GM10248 (cell line): ENCODE measurements at regions of chr1 and their contacts with region 1.

Region 1: DNA sequence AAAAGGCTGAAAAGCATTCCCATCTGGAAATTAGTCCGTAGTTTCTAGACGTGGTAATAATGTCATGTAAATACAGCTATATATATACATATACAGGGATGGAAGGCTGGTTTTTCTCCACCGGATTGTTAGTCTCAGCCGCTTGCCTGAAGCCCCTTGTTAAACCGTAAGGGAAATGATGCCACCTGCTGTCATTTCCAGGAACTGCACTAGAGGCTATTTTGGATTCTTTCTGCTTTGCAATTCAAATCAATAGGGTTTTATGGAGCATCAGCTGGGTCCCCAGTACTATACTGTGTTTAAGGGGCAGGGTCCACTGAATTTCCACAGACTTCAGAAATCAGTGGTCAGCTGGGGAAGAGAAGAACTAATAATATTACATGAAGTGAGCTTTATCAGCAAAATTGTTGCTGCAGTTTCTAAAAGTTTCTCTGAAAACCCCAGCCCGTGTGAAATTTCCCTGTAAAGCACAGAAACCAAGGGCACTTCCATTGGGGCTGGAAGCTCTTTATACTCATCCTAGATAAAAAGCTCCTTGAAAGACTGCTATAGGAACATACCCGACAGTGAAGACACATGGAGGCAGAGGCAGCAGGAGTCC is 33.8 kb upstream of the MPZL1 start:
- DNase-seq: peak; percentile 78
- CTCF ChIP-seq: peak; percentile 87

Region 2: GRCh38 chr1:167553136-167554027 is 134.6 kb before region 1 on chr1 and contains the start of gene CREG1:
- CTCF ChIA-PET with region 1: interaction called, 27 read pairs
- POLR2A ChIA-PET with region 1: no interaction called
- DNase-seq: peak; percentile 95
- CTCF ChIP-seq: no peak

Region 3: DNA sequence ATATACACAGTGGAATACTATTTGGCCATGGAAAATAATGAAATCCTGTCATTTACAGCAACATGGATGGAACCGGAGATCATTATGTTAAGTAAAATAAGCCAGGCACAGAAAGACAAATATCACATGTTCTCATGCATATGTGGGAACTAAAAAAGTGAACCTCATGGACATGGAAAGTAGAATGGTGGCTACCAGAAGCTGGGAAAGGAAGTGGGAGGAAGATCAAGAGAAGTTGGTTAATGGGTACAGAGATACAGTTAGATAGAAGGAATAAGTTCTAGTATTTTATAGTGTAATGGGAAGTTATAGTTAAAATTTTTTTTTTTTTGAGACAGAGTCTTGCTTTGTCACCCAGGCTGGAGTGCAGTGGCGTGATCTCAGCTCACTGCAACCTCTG is 99.7 kb before region 1 on chr1:
- CTCF ChIA-PET with region 1: interaction called, 16 read pairs
- POLR2A ChIA-PET with region 1: no interaction called
- DNase-seq: no peak
- CTCF ChIP-seq: no peak

Region 4: DNA sequence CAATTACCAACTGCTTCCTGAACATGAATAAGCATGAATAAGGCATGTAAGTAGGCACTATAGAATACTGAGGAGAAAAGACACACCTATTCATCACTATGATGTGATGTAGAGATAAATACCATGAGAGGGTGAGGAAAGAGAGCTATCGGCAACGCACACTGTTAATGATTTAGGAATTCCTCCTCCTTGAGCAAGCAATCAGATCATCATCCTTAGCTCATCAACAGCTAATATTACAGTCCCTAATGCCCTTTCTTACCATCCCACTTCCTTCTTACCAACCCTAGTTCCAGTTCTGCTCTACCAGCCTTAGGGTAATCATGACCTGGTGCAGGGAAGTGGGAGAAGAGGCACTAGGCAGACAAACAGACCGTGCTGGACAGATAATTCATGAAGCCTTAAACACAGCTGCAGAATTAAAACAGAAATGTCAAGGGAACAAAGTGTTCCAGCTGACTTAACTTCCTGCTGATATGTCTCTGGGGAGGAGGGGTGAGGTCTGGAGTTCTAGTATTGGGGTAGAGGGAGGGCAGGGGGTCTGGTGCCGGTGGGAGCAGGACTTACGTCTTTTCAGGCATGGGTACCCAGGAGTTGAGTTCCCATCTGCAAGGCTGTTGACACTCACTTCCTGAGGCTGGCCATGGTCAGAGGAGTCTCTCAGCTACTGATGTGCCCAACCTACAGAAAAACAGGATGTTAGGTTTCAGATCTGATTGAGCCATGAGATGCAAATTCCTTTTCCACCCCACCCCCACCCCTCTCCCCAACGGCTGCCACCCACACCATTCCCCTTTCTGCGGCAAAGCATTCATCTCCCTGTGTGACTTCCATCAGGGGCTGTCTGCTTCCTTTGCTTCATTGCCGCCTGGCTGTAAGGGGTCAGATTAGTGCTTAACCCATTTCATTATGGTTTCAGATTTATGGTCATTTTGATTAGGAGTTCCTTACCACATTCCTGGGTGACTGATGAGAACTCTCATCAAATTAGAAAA is 70.6 kb before region 1 on chr1:
- CTCF ChIA-PET with region 1: interaction called, 13 read pairs
- POLR2A ChIA-PET with region 1: no interaction called
- DNase-seq: no peak
- CTCF ChIP-seq: no peak

Region 5: GRCh38 chr1:167663002-167663772 is 24.8 kb before region 1 on chr1:
- CTCF ChIA-PET with region 1: interaction called, 32 read pairs
- POLR2A ChIA-PET with region 1: no interaction called
- DNase-seq: peak; percentile 51
- CTCF ChIP-seq: no peak

Region 6: GRCh38 chr1:167708940-167709389 is 20.9 kb after region 1 on chr1:
- CTCF ChIA-PET with region 1: interaction called, 47 read pairs
- POLR2A ChIA-PET with region 1: no interaction called
- DNase-seq: no peak
- CTCF ChIP-seq: no peak

Region 7: DNA sequence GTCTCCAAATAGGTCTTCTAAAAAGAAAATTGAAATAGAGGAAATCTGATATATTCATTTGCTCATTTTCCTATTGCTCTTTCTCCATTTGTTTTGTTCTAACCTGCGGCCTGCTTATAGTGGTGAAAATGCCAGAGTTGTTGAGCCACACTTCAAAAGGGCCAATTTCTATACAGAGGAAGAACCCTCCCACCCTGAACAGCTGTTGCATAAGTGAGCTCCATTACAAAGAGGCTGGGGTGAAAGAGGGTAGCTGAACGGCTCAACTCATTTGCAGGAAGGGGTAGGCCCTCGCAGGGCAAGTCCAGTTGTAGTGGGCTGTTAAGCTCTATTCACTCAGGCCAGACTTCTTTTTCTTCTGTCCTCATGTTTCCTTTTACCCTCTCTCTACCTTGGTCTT is 217.2 kb after region 1 on chr1:
- CTCF ChIA-PET with region 1: no interaction called
- POLR2A ChIA-PET with region 1: no interaction called
- DNase-seq: no peak
- CTCF ChIP-seq: no peak